B cell (primary cell): ENCODE measurements at regions of chr6 and their contacts with region 1.

Region 1: GRCh38 chr6:159510141-159510540 is 182.9 kb downstream of the SOD2 start:
- DNase-seq: no peak
- ATAC-seq: no peak
- H3K4me3 ChIP-seq: no peak overlapping the region
- H3K4me3 Mint-ChIP-seq: no peak overlapping the region
- H3K27ac ChIP-seq: no peak overlapping the region
- H3K27ac Mint-ChIP-seq: no peak overlapping the region
- H3K4me1 ChIP-seq: no peaks in the 10 kb centered on the region
- H3K4me1 Mint-ChIP-seq: no peaks in the 10 kb centered on the region
- H3K27me3 ChIP-seq: no peaks in the 10 kb centered on the region
- H3K27me3 Mint-ChIP-seq: peaks cover 7% of the 10 kb centered on the region
- CTCF ChIP-seq: no peak

Region 2: GRCh38 chr6:159586684-159587083 is 76.5 kb after region 1 on chr6:
- CTCF ChIA-PET with region 1: no interaction called
- POLR2A ChIA-PET with region 1: interaction called, 10 read pairs
- intact Hi-C with region 1: no loop called
- DNase-seq: no peak
- ATAC-seq: no peak
- H3K4me3 ChIP-seq: no peak overlapping the region
- H3K4me3 Mint-ChIP-seq: no peak overlapping the region
- H3K27ac ChIP-seq: no peak overlapping the region
- H3K27ac Mint-ChIP-seq: no peak overlapping the region
- H3K4me1 ChIP-seq: no peaks in the 10 kb centered on the region
- H3K4me1 Mint-ChIP-seq: no peaks in the 10 kb centered on the region
- H3K27me3 ChIP-seq: no peaks in the 10 kb centered on the region
- H3K27me3 Mint-ChIP-seq: peaks cover 6% of the 10 kb centered on the region
- CTCF ChIP-seq: no peak